HepG2 (cell line): ENCODE measurements at regions of chr19 and their contacts with region 1.

Region 1: GRCh38 chr19:52962394-52963246 is at the start of gene ZNF816:
- DNase-seq: peak; percentile 88
- ATAC-seq: peak; percentile 98
- H3K4me3 ChIP-seq: peak within 1 kb of the TSS; percentile 79 to 98 (median 80)
- H3K27ac ChIP-seq: peak within 1 kb of the TSS; percentile 75
- H3K4me1 ChIP-seq: peaks cover 35% of the 10 kb centered on the region
- H3K27me3 ChIP-seq: no peaks in the 10 kb centered on the region; a peak in 1 of 5 replicates
- CTCF ChIP-seq: 0 out of 2 replicates have a peak, but pooled peaks have one; percentile 3
- EP300 ChIP-seq: no peak
- POLR2A ChIP-seq: peak; percentile 70 to 80
- RAD21 ChIP-seq: 0 out of 2 replicates have a peak, but pooled peaks have one; percentile 6
- total RNA-seq, gene ZNF816: 14.1 and 23.1 TPM in 2 replicates

Region 2: GRCh38 chr19:52922841-52923777 is 39.5 kb before region 1 on chr19 and contains the start of gene ZNF888:
- CTCF ChIA-PET with region 1: no interaction called
- POLR2A ChIA-PET with region 1: no interaction called
- in situ Hi-C with region 1: no loop called
- intact Hi-C with region 1: loop called (anchors 2 kb)
- DNase-seq: peak; percentile 69
- ATAC-seq: peak; percentile 97
- H3K4me3 ChIP-seq: peak within 1 kb of the TSS; percentile 67 to 83 (median 80)
- H3K27ac ChIP-seq: peak within 1 kb of the TSS; percentile 81
- H3K4me1 ChIP-seq: peaks cover 17% of the 10 kb centered on the region
- H3K27me3 ChIP-seq: no peaks in the 10 kb centered on the region
- CTCF ChIP-seq: no peak
- EP300 ChIP-seq: no peak
- POLR2A ChIP-seq: peak; percentile 72 to 83
- RAD21 ChIP-seq: no peak
- total RNA-seq, gene ZNF888: 7.6 and 10.4 TPM in 2 replicates

Region 3: DNA sequence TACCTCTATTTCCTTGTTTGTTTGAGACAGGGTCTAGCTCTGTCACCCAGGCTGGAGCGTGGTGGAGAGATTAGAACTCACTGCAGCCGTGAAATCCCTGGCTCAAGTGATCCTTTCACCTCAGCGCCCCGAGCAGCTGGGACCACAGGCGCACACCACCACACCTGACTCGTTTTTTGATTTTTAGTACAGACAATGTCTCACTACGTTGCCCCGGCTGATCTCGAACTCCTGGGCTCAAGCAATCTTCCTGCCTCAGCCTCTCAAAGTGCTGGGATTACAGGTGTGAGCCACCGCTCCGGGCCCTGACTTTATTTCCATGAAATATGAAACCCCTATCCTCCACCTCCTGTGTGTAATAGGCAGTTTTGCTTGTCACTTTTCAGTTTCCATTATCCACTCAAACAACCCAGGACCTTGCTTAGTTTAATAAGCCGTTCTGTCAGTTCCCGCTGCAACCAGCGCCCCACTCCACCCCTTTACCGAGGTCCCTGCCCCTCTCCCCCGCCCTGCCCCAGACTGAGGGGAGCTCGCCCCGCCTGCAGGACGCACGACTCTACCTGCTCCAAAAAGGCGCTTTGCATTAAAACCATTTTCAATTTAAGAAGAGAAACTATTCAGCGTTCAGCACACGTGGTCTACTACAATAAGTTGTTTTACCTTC is 16.8 kb before region 1 on chr19:
- CTCF ChIA-PET with region 1: no interaction called
- POLR2A ChIA-PET with region 1: interaction called, 4 read pairs
- in situ Hi-C with region 1: no loop called
- intact Hi-C with region 1: loop called (anchors 2 kb)
- DNase-seq: no peak
- ATAC-seq: peak; percentile 8; the same call in 1 of the 3 replicates
- H3K4me3 ChIP-seq: no peak overlapping the region; a peak in 1 of 6 replicates
- H3K27ac ChIP-seq: peak overlapping the region; percentile 90
- H3K4me1 ChIP-seq: peaks cover 41% of the 10 kb centered on the region
- H3K27me3 ChIP-seq: no peaks in the 10 kb centered on the region; a peak in 2 of 5 replicates
- CTCF ChIP-seq: no peak
- EP300 ChIP-seq: no peak
- POLR2A ChIP-seq: no peak
- RAD21 ChIP-seq: no peak